ENCODE measurements at regions of chr4 and their contacts with region 1.

Region 1: DNA sequence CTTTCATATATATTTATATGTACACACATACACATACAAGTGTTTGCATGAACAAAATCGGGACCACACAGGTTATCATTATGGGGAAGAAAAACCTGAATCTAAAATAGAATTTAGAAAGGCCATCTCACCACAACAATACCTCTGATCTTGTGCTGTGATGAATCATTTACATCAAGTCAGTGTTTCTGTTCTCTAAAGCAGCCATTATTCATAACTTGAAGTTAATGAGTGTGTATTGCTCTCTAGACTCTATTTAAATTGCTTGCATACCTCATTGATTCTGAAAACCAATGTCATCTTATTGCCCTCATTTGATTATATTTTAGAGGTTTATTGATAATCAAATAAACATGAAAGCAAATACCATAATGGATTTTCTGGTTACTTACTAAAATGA is 71.6 kb downstream of the FAM114A1 start:
- DNase-seq: no peak
- ATAC-seq: peak; percentile 94
- H3K4me3 Mint-ChIP-seq: no peak overlapping the region
- H3K27ac Mint-ChIP-seq: peak overlapping the region; percentile 47
- H3K4me1 Mint-ChIP-seq: peaks cover 42% of the 10 kb centered on the region
- H3K27me3 Mint-ChIP-seq: no peaks in the 10 kb centered on the region

Region 2: GRCh38 chr4:38752941-38753806 is 186.0 kb before region 1 on chr4:
- CTCF ChIA-PET with region 1: no interaction called
- POLR2A ChIA-PET with region 1: no interaction called
- intact Hi-C with region 1: no loop called
- DNase-seq: no peak
- ATAC-seq: no peak
- H3K4me3 Mint-ChIP-seq: no peak overlapping the region
- H3K27ac Mint-ChIP-seq: no peak overlapping the region
- H3K4me1 Mint-ChIP-seq: peaks cover 7% of the 10 kb centered on the region
- H3K27me3 Mint-ChIP-seq: no peaks in the 10 kb centered on the region

Region 3: GRCh38 chr4:38856524-38857337 is 82.4 kb before region 1 on chr4 and contains the start of gene TLR6:
- CTCF ChIA-PET with region 1: no interaction called
- POLR2A ChIA-PET with region 1: no interaction called
- intact Hi-C with region 1: no loop called
- DNase-seq: peak; percentile 79
- ATAC-seq: peak; percentile 38
- H3K4me3 Mint-ChIP-seq: peak within 1 kb of the TSS; percentile 74
- H3K27ac Mint-ChIP-seq: peak within 1 kb of the TSS; percentile 90
- H3K4me1 Mint-ChIP-seq: peaks cover 32% of the 10 kb centered on the region
- H3K27me3 Mint-ChIP-seq: no peaks in the 10 kb centered on the region
- total RNA-seq, gene TLR6: 1.5 to 1.8 TPM

Region 4: GRCh38 chr4:38958453-38959190 is 19.5 kb after region 1 on chr4:
- CTCF ChIA-PET with region 1: interaction called, 5 read pairs
- POLR2A ChIA-PET with region 1: interaction called, 3 read pairs
- intact Hi-C with region 1: loop called in 1 of 2 experiments (anchors 1 kb)
- DNase-seq: no peak
- ATAC-seq: peak; percentile 57
- H3K4me3 Mint-ChIP-seq: no peak overlapping the region
- H3K27ac Mint-ChIP-seq: peak overlapping the region; percentile 84
- H3K4me1 Mint-ChIP-seq: peaks cover 33% of the 10 kb centered on the region
- H3K27me3 Mint-ChIP-seq: no peaks in the 10 kb centered on the region

Measured in activated CD4-positive, alpha-beta T cell treated with anti-CD3 and anti-CD28 coated beads for 36 hours (primary cell).